Caco-2 (cell line): ENCODE measurements at regions of chr1 and their contacts with region 1.

Region 1: DNA sequence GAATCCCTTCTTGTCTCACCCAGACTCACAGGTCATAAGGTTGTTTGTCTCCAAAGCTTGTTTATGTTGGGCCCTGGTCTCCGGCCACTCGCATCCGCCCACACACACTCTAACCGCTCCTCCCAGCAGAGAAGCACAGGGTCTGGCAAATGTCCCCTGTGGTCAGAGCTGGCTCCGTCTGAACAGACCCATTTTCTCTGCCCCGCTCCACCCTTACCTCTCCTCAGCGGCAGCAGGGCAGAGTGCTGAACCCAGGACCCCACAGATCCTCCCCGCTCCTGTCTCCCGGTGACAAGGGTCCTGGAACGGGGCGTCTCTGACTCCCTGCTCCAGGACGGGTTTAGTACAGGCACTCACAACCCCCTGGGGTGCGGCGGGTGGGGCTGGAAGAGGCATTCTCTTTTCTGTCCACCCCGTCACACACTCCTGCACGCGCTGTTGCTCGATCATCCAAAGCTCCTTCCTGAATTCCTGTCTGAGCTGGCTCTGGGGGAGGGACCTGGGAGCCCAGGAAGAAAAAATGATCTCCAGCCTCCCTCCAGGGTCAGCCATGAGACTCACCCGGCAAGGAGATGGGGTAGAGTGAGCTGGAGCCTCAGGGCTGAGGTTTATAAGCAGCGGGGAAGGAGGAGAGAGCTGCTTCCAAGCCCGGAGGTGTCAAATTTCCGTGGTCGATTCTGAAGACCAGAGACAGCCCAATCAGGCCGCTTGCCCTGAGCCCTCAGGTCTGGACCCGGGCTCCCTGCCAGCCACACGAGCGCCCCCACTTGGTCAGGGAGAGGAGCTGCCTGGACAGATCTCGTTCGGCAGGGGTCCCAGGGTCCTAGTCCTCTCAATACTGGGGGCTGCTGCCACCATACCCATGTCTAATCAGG is at the start of gene S100A13:
- DNase-seq: peak; percentile 92 to 94
- H3K4me3 ChIP-seq: peak within 1 kb of the TSS; percentile 62
- H3K4me3 Mint-ChIP-seq: peak within 1 kb of the TSS; percentile 93
- H3K27ac Mint-ChIP-seq: peak within 1 kb of the TSS; percentile 89
- H3K4me1 ChIP-seq: peaks cover 42% of the 10 kb centered on the region
- H3K4me1 Mint-ChIP-seq: peaks cover 35% of the 10 kb centered on the region
- H3K27me3 ChIP-seq: no peaks in the 10 kb centered on the region
- H3K27me3 Mint-ChIP-seq: no peaks in the 10 kb centered on the region
- CTCF ChIP-seq: peak; percentile 78 to 87
- total RNA-seq, gene S100A13: 198 and 238 TPM in 2 replicates

Region 2: DNA sequence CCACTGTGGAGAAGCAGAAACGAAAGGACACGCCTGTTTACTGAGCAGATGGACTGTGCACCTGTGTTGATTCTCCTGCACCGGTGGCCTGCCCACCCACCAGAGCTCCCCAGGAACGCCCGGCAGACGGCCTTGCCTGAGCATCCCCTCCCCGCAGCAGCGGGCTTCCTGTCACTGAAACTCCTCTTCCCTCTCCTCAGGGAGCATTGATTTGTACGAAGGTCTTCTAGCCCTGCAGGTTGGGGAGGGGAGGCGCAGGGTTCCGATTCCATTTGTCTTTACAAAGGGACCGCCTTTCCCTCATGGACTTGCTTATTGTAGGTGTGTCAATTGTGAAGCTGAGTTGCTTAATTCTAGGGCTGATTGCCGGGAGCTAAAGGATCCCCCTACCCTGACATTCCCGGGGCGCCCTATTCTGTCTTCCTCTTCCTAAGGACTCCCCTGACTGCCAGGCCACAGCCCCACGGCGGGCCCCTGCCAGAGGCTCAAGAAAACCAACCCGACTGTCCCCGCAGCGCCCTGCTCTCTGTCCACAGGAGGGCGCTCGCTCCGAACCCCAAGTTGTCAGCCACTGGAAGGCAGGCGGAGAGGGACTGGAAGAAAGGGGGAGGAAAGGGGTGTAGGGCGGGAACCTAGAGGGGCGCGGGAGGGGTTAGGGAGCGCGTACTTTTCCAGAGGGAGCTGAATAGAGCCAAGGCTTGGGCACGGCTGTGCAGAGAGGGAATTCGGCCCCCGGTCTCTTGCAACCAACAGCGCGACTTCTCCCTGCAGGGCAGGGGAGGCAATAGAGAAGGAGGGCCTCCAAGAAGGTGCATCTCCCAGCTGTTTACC is 94.2 kb before region 1 on chr1:
- CTCF ChIA-PET with region 1: interaction called, 10 read pairs
- POLR2A ChIA-PET with region 1: interaction called, 9 read pairs
- intact Hi-C with region 1: loop called (anchors 1 kb)
- DNase-seq: peak; percentile 77 to 84
- H3K4me3 ChIP-seq: peak overlapping the region; percentile 21
- H3K4me3 Mint-ChIP-seq: peak overlapping the region; percentile 95
- H3K27ac Mint-ChIP-seq: peak overlapping the region; percentile 72
- H3K4me1 ChIP-seq: peaks cover 37% of the 10 kb centered on the region
- H3K4me1 Mint-ChIP-seq: peaks cover 31% of the 10 kb centered on the region
- H3K27me3 ChIP-seq: no peaks in the 10 kb centered on the region
- H3K27me3 Mint-ChIP-seq: no peaks in the 10 kb centered on the region
- CTCF ChIP-seq: peak; percentile 74 to 91

Region 3: DNA sequence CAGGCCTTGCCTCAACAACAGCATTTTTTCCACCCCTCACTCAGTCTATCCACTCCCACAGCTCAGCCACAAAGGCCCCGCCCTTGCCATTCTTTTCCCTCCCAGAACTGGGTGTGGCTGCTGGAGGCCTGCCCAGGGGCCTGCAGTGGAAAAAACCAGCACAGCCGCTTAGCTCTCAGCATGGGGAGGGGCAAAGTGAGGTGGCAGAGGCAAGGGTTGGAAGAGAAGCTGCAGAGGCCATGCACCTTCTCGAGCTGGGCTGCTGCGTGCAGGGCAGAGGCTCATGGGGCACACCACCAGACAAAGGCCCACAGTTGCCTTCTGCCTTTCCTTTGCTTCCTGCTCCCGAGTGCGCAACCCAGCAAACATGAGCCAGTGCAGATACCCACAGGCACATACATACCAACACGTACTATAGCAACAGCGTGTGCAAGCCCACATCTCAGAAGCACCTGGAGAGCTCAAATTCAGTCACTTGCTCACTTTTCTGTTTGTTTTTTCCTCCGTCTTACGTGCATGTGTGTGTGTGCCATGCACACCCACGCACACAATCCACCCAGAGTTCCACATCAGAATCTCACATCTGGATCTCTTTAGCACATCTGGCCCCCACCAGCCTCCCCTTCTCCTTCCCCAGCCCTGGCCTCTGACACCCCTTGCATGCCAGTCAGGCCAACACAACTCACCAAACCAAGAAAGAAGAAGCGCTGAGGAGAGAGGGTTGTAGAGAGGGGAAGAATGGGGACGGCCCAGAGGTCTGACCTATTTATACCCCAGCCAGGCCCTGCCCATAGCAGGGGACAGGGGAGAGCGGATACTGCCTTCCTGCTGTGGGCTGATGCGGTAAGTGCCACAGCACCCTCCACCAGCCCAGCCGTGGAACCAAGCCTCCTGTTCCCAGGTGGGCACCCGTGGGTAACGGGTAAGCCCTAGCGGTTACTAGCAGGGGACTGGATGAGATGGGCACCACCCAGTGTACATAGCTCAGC is 81.8 kb before region 1 on chr1 and contains the start of gene S100A4:
- CTCF ChIA-PET with region 1: interaction called, 3 read pairs
- POLR2A ChIA-PET with region 1: interaction called, 15 read pairs
- intact Hi-C with region 1: no loop called
- DNase-seq: peak; percentile 95 to 97
- H3K4me3 ChIP-seq: no peak within 1 kb of the TSS
- H3K4me3 Mint-ChIP-seq: peak within 1 kb of the TSS; percentile 71
- H3K27ac Mint-ChIP-seq: peak within 1 kb of the TSS; percentile 95
- H3K4me1 ChIP-seq: peaks cover 58% of the 10 kb centered on the region
- H3K4me1 Mint-ChIP-seq: peaks cover 51% of the 10 kb centered on the region
- H3K27me3 ChIP-seq: no peaks in the 10 kb centered on the region
- H3K27me3 Mint-ChIP-seq: no peaks in the 10 kb centered on the region
- CTCF ChIP-seq: no peak
- total RNA-seq, gene S100A4: 53.6 and 54.4 TPM in 2 replicates

Region 4: DNA sequence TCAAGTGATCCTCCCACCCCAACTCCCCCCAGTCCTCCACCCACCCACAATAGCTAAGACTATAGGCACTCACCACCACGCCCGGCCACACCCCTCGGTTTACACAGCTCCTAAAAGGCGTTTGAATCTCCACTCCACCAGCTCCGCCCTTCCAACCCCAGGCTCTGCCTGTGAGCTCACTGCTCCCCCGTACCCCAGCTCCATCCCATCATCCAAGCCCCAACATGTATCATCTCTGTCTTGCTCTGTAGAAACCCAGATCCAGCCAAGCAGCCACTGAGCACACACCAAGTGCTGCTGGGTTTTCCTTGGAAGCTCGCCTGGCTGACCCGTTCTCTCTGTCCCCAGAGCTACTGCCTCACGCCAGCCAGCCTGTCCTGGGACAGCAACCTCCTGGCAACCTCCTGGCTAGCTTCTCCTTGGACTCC is 49.5 kb before region 1 on chr1:
- CTCF ChIA-PET with region 1: interaction called, 18 read pairs
- POLR2A ChIA-PET with region 1: interaction called, 13 read pairs
- intact Hi-C with region 1: loop called (anchors 2 kb)
- DNase-seq: peak; percentile 52 to 76
- H3K4me3 ChIP-seq: no peak overlapping the region
- H3K4me3 Mint-ChIP-seq: peak overlapping the region; percentile 16
- H3K27ac Mint-ChIP-seq: peak overlapping the region; percentile 73
- H3K4me1 ChIP-seq: peaks cover 62% of the 10 kb centered on the region
- H3K4me1 Mint-ChIP-seq: peaks cover 45% of the 10 kb centered on the region
- H3K27me3 ChIP-seq: no peaks in the 10 kb centered on the region
- H3K27me3 Mint-ChIP-seq: no peaks in the 10 kb centered on the region
- CTCF ChIP-seq: no peak

Region 5: GRCh38 chr1:153643100-153643499 is 15.9 kb after region 1 on chr1:
- CTCF ChIA-PET with region 1: interaction called, 13 read pairs
- POLR2A ChIA-PET with region 1: interaction called, 10 read pairs
- intact Hi-C with region 1: no loop called
- DNase-seq: no peak
- H3K4me3 ChIP-seq: no peak overlapping the region
- H3K4me3 Mint-ChIP-seq: no peak overlapping the region
- H3K27ac Mint-ChIP-seq: no peak overlapping the region
- H3K4me1 ChIP-seq: peaks cover 5% of the 10 kb centered on the region; the same call in 1 of the 2 replicates
- H3K4me1 Mint-ChIP-seq: peaks cover 28% of the 10 kb centered on the region
- H3K27me3 ChIP-seq: no peaks in the 10 kb centered on the region
- H3K27me3 Mint-ChIP-seq: no peaks in the 10 kb centered on the region
- CTCF ChIP-seq: no peak

Region 6: DNA sequence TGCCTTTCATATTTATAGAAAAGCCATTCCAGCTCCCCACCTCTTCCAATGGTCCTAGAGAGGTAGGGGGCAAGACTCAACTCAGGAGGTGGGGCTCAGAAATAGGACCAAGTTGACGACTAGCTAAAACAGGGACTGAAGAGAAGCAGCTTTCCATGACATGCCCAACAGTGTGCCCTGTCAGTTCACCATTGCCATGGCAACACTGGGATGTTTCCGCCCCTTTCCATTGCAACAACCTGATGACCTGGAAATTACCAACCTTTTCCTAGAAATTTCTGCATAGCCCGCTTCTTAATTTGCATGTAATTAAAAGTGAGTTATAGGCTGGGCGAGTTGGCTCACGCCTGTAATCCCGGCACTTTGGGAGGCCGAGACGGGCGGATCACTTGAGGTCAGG is 78.3 kb after region 1 on chr1:
- CTCF ChIA-PET with region 1: no interaction called
- POLR2A ChIA-PET with region 1: no interaction called
- intact Hi-C with region 1: no loop called
- DNase-seq: no peak
- H3K4me3 ChIP-seq: no peak overlapping the region
- H3K4me3 Mint-ChIP-seq: no peak overlapping the region
- H3K27ac Mint-ChIP-seq: no peak overlapping the region
- H3K4me1 ChIP-seq: no peaks in the 10 kb centered on the region
- H3K4me1 Mint-ChIP-seq: peaks cover 7% of the 10 kb centered on the region
- H3K27me3 ChIP-seq: no peaks in the 10 kb centered on the region
- H3K27me3 Mint-ChIP-seq: no peaks in the 10 kb centered on the region
- CTCF ChIP-seq: no peak